H1 (cell line): ENCODE measurements at regions of chr11 and their contacts with region 1.

Region 1: DNA sequence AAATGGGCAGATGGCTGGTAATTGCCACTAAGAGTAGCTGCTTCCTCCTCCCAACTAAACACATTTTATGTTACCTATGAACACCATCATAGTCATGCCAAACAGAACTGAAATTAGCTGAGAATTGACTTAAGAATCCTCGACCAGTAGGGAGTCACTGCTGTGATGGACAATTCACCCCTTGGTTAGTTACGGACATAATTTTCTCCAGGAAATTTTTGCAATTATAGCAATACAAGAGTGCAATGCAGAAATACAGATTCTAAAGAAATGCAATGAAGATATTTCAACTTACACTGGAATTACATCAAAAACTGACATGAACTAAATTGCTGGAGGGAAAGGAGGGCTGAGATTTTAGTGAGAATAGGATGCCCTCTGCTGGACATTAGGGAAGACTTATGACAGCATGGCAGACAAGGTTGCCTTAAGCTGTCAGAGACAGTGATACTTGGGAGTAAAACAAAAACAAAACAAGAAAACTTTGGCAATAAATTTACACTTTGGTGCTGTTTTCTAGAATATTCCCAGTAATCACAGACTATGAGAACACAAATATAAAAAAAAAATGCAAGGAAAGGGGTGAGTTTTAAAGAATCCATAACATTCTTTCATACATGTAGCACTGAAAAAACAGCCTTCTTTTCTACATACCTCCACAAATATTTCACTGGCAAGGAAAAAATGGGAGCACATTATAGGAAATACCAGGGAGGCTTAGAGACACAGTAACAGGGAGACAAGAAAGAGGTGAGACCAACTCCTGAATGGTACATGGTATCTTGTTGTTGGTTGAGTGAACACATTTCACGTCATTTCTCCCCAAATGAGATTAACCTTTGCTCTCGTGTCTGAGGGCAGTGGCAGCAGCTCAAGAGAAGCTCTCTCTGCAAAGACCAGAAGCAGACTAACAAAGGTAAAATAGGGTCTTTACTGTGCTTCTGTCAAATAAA is 11.2 kb upstream of the PPP2R1B start:
- DNase-seq: no peak
- H3K4me3 ChIP-seq: no peak overlapping the region
- H3K27ac ChIP-seq: no peak overlapping the region
- H3K4me1 ChIP-seq: no peaks in the 10 kb centered on the region
- H3K27me3 ChIP-seq: no peaks in the 10 kb centered on the region
- CTCF ChIP-seq: peak in 2 of 3 experiments; percentile 67 to 75; a peak in 3 of 4 replicates
- EP300 ChIP-seq: no peak
- POLR2A ChIP-seq: no peak
- RAD21 ChIP-seq: peak; percentile 89 to 91

Region 2: DNA sequence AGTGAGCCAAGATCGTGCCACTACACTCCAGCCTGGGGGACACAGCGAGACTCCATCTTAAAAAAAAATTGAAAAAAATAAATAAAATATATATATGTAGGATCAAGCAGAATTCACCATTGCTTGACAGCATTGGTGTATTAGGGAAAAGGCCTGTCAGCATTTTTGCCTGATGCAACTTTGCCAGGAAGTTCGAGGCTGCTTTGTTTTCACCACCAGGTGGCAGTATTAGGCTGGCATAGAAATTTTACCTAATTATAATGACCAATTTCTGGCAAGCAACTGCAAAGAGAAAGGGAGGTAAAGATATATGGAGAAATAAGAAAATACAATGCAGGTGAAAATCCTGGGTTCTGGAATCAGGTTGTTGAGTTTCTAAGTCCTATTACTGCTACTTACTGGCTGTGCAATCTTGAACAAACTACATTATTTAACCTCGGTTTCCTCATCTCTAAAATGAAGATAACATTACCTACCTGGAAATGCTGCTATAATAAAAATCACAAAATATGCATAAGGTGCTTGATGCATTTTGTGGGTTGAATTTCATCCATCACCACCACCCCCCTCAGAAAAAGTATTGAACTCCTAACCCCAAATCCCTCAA is 212.2 kb before region 1 on chr11:
- CTCF ChIA-PET with region 1: interaction called, 10 read pairs
- POLR2A ChIA-PET with region 1: interaction called, 4 read pairs
- DNase-seq: peak in 1 of 2 experiments; percentile 72
- H3K4me3 ChIP-seq: no peak overlapping the region
- H3K27ac ChIP-seq: no peak overlapping the region
- H3K4me1 ChIP-seq: peaks cover 0 to 6% (median 4%) of the 10 kb centered on the region in 4 experiments; a peak in 4 of 7 replicates
- H3K27me3 ChIP-seq: no peaks in the 10 kb centered on the region
- CTCF ChIP-seq: peak; percentile 6 to 74 (median 72)
- EP300 ChIP-seq: no peak
- POLR2A ChIP-seq: no peak
- RAD21 ChIP-seq: peak; percentile 81 to 84

Region 3: DNA sequence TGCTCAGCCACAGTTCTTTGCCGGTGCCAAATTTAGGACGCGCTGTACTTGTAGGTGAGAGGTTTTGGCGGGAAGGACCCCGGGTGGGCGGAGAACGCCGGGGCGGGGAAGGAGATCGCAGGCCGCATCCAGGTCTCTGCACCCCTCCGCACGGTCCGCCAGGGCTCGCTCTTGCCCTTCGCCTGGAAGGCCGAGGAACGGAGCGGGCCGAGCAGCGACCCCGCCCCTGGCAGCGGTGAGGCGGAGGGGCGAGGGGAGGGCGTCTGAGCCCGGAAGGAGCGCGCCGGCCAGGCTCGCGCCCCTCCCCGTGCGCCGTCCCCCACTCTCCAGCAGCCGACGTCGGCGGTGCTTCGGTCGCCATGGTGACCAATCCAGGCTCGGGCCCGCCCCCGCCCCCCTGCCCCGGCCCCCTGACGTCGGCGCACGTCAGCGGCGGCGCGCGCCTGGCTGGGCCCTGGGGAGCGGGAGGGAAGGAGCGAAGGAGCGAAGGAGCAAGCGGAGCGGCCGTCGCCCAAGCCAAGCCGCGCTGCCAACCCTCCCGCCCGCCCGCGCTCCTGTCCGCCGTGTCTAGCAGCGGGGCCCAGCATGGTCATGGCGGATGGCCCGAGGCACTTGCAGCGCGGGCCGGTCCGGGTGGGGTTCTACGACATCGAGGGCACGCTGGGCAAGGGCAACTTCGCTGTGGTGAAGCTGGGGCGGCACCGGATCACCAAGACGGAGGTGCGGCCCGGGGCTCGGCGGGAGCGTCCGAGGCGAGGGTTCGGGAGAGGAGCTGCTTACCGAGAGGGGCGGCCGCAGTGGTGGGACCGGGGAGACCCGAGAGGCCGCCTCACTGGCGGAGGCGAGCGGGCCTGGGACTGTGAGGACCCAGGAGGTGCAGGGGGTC is 175.1 kb before region 1 on chr11 and contains the start of gene SIK2:
- CTCF ChIA-PET with region 1: interaction called, 22 read pairs
- POLR2A ChIA-PET with region 1: interaction called, 4 read pairs
- DNase-seq: peak; percentile 92
- H3K4me3 ChIP-seq: peak within 1 kb of the TSS; percentile 62 to 96 (median 77)
- H3K27ac ChIP-seq: peak within 1 kb of the TSS; percentile 45; the same call in 1 of the 2 replicates
- H3K4me1 ChIP-seq: peaks cover 0 to 10% (median 3%) of the 10 kb centered on the region in 4 experiments; a peak in 2 of 7 replicates
- H3K27me3 ChIP-seq: peaks cover 0 to 18% (median 12%) of the 10 kb centered on the region in 4 experiments; a peak in 5 of 7 replicates
- CTCF ChIP-seq: peak; percentile 93 to 97 (median 96)
- EP300 ChIP-seq: peak in 1 of 2 experiments; percentile 39; a peak in 1 of 3 replicates
- POLR2A ChIP-seq: 0 out of 3 replicates have a peak, but pooled peaks of 1 of the 2 experiments have one; percentile 53
- RAD21 ChIP-seq: peak; percentile 99
- total RNA-seq, gene SIK2: 8.8 and 12.7 TPM in 2 replicates

Region 4: GRCh38 chr11:111735262-111736116 is 41.9 kb before region 1 on chr11:
- CTCF ChIA-PET with region 1: interaction called, 20 read pairs
- POLR2A ChIA-PET with region 1: no interaction called
- DNase-seq: no peak
- H3K4me3 ChIP-seq: no peak overlapping the region
- H3K27ac ChIP-seq: no peak overlapping the region
- H3K4me1 ChIP-seq: peaks cover 0 to 18% (median 7%) of the 10 kb centered on the region in 4 experiments; a peak in 6 of 7 replicates
- H3K27me3 ChIP-seq: no peaks in the 10 kb centered on the region
- CTCF ChIP-seq: no peak
- EP300 ChIP-seq: no peak
- POLR2A ChIP-seq: no peak
- RAD21 ChIP-seq: no peak

Region 5: GRCh38 chr11:111756097-111756496 is 21.3 kb before region 1 on chr11:
- CTCF ChIA-PET with region 1: interaction called, 106 read pairs
- POLR2A ChIA-PET with region 1: interaction called, 3 read pairs
- DNase-seq: no peak
- H3K4me3 ChIP-seq: no peak overlapping the region
- H3K27ac ChIP-seq: no peak overlapping the region
- H3K4me1 ChIP-seq: no peaks in the 10 kb centered on the region
- H3K27me3 ChIP-seq: no peaks in the 10 kb centered on the region
- CTCF ChIP-seq: no peak
- EP300 ChIP-seq: no peak
- POLR2A ChIP-seq: no peak
- RAD21 ChIP-seq: no peak

Region 6: DNA sequence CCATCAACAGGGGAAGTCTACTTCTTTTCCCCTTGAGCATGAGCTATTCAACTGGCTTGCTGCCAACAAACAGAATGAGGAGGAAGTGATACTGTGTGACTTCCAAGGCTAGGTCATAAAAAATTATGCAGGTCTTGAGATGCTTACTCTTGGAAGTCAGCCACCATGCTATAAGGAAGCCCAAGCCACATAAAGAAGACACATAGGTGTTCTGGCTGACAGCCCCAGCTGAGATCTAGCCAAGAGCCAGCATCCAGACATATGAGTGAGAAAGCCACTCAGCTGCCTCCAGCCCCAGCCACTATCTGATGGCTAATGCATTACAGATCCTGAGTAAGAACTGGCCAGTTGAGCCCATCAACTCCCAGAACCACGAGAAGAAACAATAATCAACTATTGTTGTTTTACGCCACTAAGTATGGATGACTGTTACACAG is 19.8 kb after region 1 on chr11:
- CTCF ChIA-PET with region 1: interaction called, 11 read pairs
- POLR2A ChIA-PET with region 1: no interaction called
- DNase-seq: no peak
- H3K4me3 ChIP-seq: no peak overlapping the region
- H3K27ac ChIP-seq: no peak overlapping the region
- H3K4me1 ChIP-seq: no peaks in the 10 kb centered on the region
- H3K27me3 ChIP-seq: peaks cover 0 to 1% (median 0%) of the 10 kb centered on the region in 4 experiments; a peak in 1 of 7 replicates
- CTCF ChIP-seq: no peak
- EP300 ChIP-seq: no peak
- POLR2A ChIP-seq: no peak
- RAD21 ChIP-seq: no peak

Region 7: DNA sequence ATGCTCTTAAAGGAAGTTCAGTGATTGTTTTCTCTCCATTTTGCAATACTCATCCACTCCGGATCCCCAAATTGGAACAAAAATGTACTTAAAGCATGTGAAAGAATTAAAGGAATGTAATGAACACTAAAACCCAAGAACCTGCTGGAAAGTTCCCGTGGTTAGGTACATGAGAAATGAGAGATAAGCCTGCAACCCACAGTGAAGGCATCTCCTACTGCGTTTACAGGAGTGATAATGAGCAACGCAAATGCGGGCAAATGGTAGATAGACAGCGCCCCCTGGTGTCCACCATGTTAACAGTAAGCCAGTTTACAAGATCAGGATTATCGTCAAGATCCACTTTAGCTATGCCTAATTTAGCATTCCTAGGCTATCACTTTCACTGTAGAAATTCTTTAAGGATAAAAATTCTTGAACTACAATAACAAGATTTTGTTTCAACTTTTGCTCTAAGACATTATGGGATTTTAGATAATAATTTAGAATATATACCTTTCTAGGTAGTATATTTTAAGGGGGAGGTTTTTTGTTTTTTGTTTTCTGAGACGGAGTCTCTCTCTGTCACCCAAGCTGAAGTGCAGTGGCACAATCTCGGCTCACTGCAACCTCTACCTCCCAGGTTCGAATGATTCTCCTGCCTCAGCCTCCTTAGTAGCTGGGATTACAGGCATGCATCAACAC is 64.1 kb after region 1 on chr11:
- CTCF ChIA-PET with region 1: interaction called, 10 read pairs
- POLR2A ChIA-PET with region 1: no interaction called
- DNase-seq: peak; percentile 46 to 94
- H3K4me3 ChIP-seq: no peak overlapping the region
- H3K27ac ChIP-seq: no peak overlapping the region
- H3K4me1 ChIP-seq: peaks cover 0 to 7% (median 3%) of the 10 kb centered on the region in 4 experiments; a peak in 2 of 7 replicates
- H3K27me3 ChIP-seq: no peaks in the 10 kb centered on the region
- CTCF ChIP-seq: peak; percentile 56 to 91 (median 86)
- EP300 ChIP-seq: no peak
- POLR2A ChIP-seq: no peak
- RAD21 ChIP-seq: peak; percentile 97